GM12878 (cell line): ENCODE measurements at regions of chr5 and their contacts with region 1.

Region 1: DNA sequence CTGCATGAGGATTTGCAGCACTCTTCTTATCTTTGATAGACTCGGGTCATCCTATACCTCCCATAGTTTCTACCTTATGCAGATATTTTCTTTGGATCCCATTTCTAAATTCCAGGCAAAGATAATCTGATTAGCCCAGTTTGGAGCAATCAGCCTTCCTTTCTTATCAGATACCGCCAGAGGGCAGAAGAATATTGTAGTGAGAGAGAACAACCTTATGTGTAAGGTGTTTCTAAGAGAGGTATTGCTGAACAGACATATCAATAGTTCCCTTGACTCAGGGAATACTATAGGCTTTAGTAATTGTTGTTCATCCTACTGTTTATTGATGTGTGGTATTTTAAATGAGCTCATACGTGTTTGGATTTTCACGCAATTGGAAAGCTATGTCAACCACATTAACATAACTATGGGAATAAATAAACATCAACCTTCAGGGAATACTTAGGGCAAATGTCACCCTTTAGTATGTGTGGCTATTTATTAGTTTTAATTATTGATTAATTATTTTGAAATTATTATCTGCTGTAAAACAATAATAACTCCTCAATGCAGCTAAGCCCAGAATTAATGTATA is 1435.2 kb upstream of the CDH9 start:
- DNase-seq: no peak
- ATAC-seq: peak; percentile 64
- H3K4me3 ChIP-seq: no peak overlapping the region
- H3K27ac ChIP-seq: no peak overlapping the region
- H3K4me1 ChIP-seq: no peaks in the 10 kb centered on the region
- H3K27me3 ChIP-seq: no peaks in the 10 kb centered on the region
- CTCF ChIP-seq: peak in 1 of 3 experiments; percentile 19; a peak in 2 of 6 replicates
- EP300 ChIP-seq: no peak
- POLR2A ChIP-seq: no peak
- RAD21 ChIP-seq: no peak

Region 2: GRCh38 chr5:28488752-28489151 is 15.1 kb after region 1 on chr5:
- CTCF ChIA-PET with region 1: interaction called, 12 read pairs
- POLR2A ChIA-PET with region 1: no interaction called
- RAD21 ChIA-PET with region 1: no interaction called
- SMC1A ChIA-PET with region 1: interaction called, 4 read pairs
- in situ Hi-C with region 1: no loop called
- intact Hi-C with region 1: no loop called
- DNase-seq: no peak
- ATAC-seq: no peak
- H3K4me3 ChIP-seq: no peak overlapping the region
- H3K27ac ChIP-seq: no peak overlapping the region
- H3K4me1 ChIP-seq: no peaks in the 10 kb centered on the region
- H3K27me3 ChIP-seq: no peaks in the 10 kb centered on the region
- CTCF ChIP-seq: no peak
- EP300 ChIP-seq: no peak
- POLR2A ChIP-seq: no peak
- RAD21 ChIP-seq: no peak

Region 3: DNA sequence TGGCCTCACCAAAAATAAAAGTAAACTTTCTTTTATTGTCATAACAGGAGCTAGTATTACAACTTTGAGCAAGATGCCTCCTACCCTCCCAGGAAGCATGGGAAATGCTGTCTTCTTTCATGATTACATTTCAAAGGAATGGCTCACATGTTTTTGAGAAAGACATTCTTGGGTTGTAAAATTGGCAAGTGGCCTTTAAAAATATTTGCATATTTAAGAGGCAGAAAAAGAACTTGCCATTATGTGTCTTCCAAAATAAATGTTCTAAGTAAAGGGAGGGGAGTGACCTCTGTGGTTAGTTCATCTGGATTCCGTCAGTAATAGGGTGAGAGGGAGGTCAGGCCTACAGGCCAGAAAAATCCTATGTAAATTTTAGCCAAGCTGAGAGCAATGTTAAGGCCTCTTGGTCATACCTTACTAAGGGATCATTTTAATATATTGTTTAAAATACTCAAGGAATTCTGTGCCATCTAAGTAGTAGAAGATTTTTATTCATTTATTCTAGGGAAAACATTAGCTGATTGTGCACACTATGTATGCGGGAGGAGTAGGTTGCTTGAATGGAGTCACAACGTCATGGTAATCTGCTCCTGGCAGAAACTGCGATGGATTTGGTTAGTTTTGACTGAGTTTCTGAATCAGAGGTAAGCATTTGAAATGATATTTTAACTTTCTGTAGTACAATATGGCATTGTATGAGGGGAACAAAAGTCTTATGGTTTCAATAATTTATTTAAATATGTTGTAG is 50.4 kb after region 1 on chr5:
- CTCF ChIA-PET with region 1: interaction called, 11 read pairs
- POLR2A ChIA-PET with region 1: no interaction called
- RAD21 ChIA-PET with region 1: interaction called, 12 read pairs
- SMC1A ChIA-PET with region 1: interaction called, 18 read pairs
- in situ Hi-C with region 1: no loop called
- intact Hi-C with region 1: no loop called
- DNase-seq: no peak
- ATAC-seq: peak; percentile 44; the same call in 2 of the 3 replicates
- H3K4me3 ChIP-seq: no peak overlapping the region
- H3K27ac ChIP-seq: no peak overlapping the region
- H3K4me1 ChIP-seq: no peaks in the 10 kb centered on the region
- H3K27me3 ChIP-seq: no peaks in the 10 kb centered on the region
- CTCF ChIP-seq: no peak
- EP300 ChIP-seq: no peak
- POLR2A ChIP-seq: no peak
- RAD21 ChIP-seq: no peak

Region 4: DNA sequence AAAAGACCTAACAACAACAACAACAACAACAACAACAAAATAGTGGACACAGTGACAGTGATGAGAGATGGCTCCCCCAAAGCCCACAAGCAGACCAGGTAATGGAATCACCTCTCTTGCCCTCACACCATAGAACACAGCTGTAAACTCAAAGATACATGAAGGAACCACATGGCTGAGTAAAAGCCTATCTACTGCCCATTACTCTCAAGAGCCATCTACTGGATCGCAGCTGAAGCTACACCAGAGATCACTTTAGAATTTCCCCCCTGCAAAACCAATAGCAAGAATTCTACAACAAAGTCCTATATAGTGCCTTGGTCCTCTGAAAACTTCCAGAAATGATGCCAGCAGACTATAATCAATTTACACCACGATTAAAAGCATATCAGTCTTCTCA is 102.4 kb after region 1 on chr5:
- CTCF ChIA-PET with region 1: interaction called, 172 read pairs
- POLR2A ChIA-PET with region 1: interaction called, 5 read pairs
- RAD21 ChIA-PET with region 1: interaction called, 78 read pairs
- SMC1A ChIA-PET with region 1: interaction called, 82 read pairs
- in situ Hi-C with region 1: no loop called
- intact Hi-C with region 1: loop called (anchors 5 kb)
- DNase-seq: no peak
- ATAC-seq: peak; percentile 72
- H3K4me3 ChIP-seq: no peak overlapping the region
- H3K27ac ChIP-seq: no peak overlapping the region
- H3K4me1 ChIP-seq: no peaks in the 10 kb centered on the region
- H3K27me3 ChIP-seq: no peaks in the 10 kb centered on the region
- CTCF ChIP-seq: peak in 1 of 3 experiments; percentile 13; a peak in 2 of 6 replicates
- EP300 ChIP-seq: no peak
- POLR2A ChIP-seq: no peak
- RAD21 ChIP-seq: no peak

Region 5: DNA sequence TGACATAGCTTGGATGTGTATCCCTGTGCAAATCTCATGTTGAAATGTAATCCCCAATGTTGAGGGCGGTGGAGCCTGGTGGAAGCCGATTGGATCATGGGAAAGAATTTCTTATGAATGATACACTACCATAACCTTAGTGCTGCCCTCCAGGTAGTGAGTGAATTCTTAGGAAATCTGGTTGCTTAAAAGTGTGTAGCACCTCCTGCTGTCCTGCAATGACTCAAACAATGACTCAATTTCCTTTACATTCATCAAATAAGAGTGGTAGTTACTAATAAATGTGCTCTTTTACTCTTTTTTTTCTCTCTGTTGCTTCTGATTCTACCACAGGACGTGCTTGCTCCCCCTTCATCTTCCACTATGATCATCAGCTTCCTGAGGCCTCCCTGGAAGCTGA is 260.8 kb after region 1 on chr5:
- CTCF ChIA-PET with region 1: interaction called, 15 read pairs
- POLR2A ChIA-PET with region 1: no interaction called
- RAD21 ChIA-PET with region 1: interaction called, 7 read pairs
- SMC1A ChIA-PET with region 1: interaction called, 16 read pairs
- in situ Hi-C with region 1: no loop called
- intact Hi-C with region 1: no loop called
- DNase-seq: no peak
- ATAC-seq: no peak
- H3K4me3 ChIP-seq: no peak overlapping the region
- H3K27ac ChIP-seq: no peak overlapping the region
- H3K4me1 ChIP-seq: no peaks in the 10 kb centered on the region
- H3K27me3 ChIP-seq: no peaks in the 10 kb centered on the region
- CTCF ChIP-seq: no peak
- EP300 ChIP-seq: no peak
- POLR2A ChIP-seq: no peak
- RAD21 ChIP-seq: no peak

Region 6: DNA sequence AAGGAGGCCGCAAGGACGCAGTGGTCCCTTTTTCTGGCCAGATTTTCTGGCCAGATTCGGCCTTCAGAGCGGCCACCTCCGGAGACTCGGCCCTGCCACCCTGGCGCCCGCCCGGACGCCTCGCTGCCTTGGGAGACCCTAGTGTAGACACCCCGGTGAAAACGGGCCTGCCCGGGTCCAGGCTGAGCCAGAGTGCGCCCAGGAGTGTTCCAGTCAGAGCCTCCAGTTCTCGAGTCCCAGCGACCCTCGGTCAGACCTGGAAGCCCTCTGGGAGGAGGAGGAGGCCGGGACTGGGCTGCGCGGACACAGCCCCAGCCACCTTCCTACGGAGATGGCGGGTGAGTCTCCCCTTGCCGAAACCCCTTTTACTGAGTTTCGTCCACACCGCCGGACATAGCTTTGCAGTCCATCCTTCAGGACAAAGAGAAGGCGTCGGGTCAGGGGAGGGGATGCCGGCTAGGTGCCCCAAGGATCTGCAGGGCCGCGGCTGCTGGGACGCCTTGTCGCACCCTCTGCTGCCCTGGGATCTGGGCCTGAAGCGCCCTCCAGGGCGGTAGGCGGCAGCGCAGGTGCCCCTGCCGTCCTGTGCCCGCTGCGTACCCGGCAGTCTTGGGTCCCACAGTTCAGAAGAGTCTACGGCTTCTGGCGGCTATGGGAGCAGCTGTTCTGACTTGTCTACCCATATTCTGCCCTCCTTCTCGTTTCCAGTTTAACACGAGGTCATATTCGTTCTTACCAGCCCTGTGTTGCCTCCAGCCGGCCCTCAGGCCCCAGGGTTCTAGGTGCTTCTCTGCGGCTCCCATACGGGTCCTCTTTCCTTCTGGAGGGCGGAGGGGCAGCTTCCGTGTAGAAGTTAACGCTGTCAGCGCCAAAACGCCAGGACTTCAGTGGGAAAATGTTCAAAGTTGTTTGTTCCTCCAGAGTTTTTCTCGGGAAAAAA is 336.5 kb after region 1 on chr5:
- CTCF ChIA-PET with region 1: interaction called, 15 read pairs
- POLR2A ChIA-PET with region 1: no interaction called
- RAD21 ChIA-PET with region 1: interaction called, 3 read pairs
- SMC1A ChIA-PET with region 1: interaction called, 5 read pairs
- in situ Hi-C with region 1: no loop called
- intact Hi-C with region 1: no loop called
- DNase-seq: no peak
- ATAC-seq: no peak
- H3K4me3 ChIP-seq: no peak overlapping the region
- H3K27ac ChIP-seq: no peak overlapping the region
- H3K4me1 ChIP-seq: no peaks in the 10 kb centered on the region
- H3K27me3 ChIP-seq: no peaks in the 10 kb centered on the region
- CTCF ChIP-seq: no peak
- EP300 ChIP-seq: no peak
- POLR2A ChIP-seq: no peak
- RAD21 ChIP-seq: no peak